Posterior cingulate gyrus (tissue), 11 donors: ENCODE measurements at regions of chr6 and their contacts with region 1.

Region 1: GRCh38 chr6:129251669-129252376 is 368.9 kb downstream of the LAMA2 start:
- DNase-seq: peak in 5 of 10 donors; percentile 31 to 68 (median 50)

Region 2: DNA sequence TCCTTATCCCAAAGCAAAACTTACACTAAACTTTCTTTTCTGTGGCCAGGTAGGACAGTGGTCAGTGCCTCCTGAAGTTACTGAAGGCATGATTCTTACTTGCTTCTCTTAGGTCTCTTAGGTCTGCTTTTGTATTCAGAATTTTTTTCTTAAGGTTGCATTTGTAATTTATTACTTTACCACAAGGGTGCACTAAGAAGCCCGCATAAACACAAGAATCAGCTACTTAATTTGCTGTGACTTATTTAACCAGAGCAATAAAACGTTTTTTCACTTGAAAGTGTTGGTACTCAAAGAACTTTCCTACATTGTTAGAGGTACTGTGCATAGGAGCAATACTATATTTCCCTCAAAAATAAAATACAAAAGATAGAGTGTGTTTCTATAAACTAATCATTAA is 444.2 kb before region 1 on chr6:
- intact Hi-C with region 1: loop called (anchors 10 kb)
- DNase-seq: no peak

Region 3: GRCh38 chr6:129130959-129131681 is 120.7 kb before region 1 on chr6:
- intact Hi-C with region 1: loop called (anchors 5 kb)
- DNase-seq: no peak